Activated CD4-positive, alpha-beta T cell treated with anti-CD3 and anti-CD28 coated beads for 36 hours (primary cell): ENCODE measurements at regions of chr17 and their contacts with region 1.

Region 1: GRCh38 chr17:48392857-48393256 is 37.2 kb downstream of the SKAP1 start:
- DNase-seq: no peak
- ATAC-seq: no peak
- H3K4me3 Mint-ChIP-seq: no peak overlapping the region
- H3K27ac Mint-ChIP-seq: no peak overlapping the region
- H3K4me1 Mint-ChIP-seq: peaks cover 48% of the 10 kb centered on the region
- H3K27me3 Mint-ChIP-seq: no peaks in the 10 kb centered on the region

Region 2: GRCh38 chr17:48374650-48375230 is 18.1 kb before region 1 on chr17:
- CTCF ChIA-PET with region 1: interaction called, 10 read pairs
- POLR2A ChIA-PET with region 1: interaction called, 3 read pairs
- intact Hi-C with region 1: no loop called
- DNase-seq: peak; percentile 42
- ATAC-seq: peak; percentile 61
- H3K4me3 Mint-ChIP-seq: no peak overlapping the region
- H3K27ac Mint-ChIP-seq: no peak overlapping the region
- H3K4me1 Mint-ChIP-seq: peaks cover 29% of the 10 kb centered on the region
- H3K27me3 Mint-ChIP-seq: no peaks in the 10 kb centered on the region

Region 3: DNA sequence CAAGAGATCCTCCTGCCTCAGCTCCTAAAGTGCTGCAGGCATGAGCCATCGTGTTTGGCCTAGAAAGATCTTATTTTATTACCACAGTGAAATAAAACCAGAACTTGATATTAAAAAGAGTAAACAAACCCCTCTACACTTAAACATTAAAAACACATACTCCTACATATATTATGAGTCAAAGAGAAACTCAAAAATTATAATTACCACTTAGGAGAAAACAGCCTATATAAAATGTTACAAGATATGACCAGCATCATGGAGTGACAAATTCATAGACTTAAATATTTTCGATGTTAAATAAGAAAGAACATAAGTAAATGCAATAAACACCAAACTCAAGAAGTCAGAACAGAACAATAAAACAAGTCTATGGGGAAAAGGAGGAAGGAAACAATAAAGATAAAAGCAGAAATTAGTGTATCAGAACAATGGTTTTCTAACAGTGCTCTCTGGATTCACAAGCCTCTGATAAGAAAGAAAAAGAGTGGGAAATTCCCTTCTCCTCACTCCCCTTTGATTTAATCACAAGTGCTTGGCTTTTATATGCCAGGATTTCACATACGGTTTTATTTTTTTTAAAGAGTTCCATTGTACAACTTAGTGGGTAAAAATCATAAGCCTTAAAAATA is 14.2 kb after region 1 on chr17:
- CTCF ChIA-PET with region 1: interaction called, 15 read pairs
- POLR2A ChIA-PET with region 1: interaction called, 9 read pairs
- intact Hi-C with region 1: loop called (anchors 1 to 2 kb)
- DNase-seq: no peak
- ATAC-seq: peak; percentile 40
- H3K4me3 Mint-ChIP-seq: peak overlapping the region; percentile 33
- H3K27ac Mint-ChIP-seq: peak overlapping the region; percentile 82
- H3K4me1 Mint-ChIP-seq: peaks cover 61% of the 10 kb centered on the region
- H3K27me3 Mint-ChIP-seq: no peaks in the 10 kb centered on the region

Region 4: DNA sequence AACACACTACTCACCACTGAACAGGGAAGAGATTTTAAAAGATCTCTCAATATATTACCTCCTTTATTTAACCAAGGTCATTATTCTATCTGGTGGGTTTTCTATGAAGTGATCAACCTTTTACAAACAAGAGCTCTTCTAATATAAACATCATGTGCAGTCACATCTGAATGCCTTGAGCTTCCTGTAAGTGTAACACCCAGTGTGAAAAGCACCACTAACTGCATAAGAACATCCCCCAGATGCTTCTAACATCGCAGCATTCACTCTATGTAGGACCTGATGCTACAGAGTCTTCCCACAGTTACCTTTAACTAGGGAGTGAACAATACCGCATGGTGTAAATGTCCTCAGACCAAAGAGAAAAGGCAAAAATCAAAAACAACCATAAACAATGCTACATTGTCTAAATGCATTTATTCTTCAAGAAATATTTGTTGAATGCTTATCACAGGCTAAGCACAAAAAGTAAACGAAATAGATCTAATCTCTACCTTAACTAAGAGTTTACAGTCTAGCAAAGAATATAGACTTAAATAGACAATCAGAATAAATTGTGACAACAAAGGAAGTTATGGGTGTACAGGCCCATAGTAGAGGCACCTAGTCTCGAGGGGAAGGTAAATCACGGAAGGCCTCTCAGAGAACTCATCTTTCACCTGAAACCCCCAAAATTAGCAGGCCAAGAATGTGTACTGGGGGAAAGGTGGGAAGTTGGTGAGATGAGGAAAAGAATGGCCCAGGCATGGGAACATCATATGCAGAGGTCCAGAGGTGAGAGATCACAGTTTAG is 21.0 kb after region 1 on chr17:
- CTCF ChIA-PET with region 1: interaction called, 4 read pairs
- POLR2A ChIA-PET with region 1: interaction called, 9 read pairs
- intact Hi-C with region 1: loop called (anchors 1 to 2 kb)
- DNase-seq: no peak
- ATAC-seq: peak; percentile 43
- H3K4me3 Mint-ChIP-seq: peak overlapping the region; percentile 10
- H3K27ac Mint-ChIP-seq: peak overlapping the region; percentile 95
- H3K4me1 Mint-ChIP-seq: peaks cover 93% of the 10 kb centered on the region
- H3K27me3 Mint-ChIP-seq: no peaks in the 10 kb centered on the region

Region 5: GRCh38 chr17:48429638-48430586 is 37.1 kb after region 1 on chr17 and contains the start of gene SKAP1:
- CTCF ChIA-PET with region 1: interaction called, 4 read pairs
- POLR2A ChIA-PET with region 1: no interaction called
- intact Hi-C with region 1: loop called (anchors 2 to 5 kb)
- DNase-seq: peak; percentile 77
- ATAC-seq: peak; percentile 62
- H3K4me3 Mint-ChIP-seq: peak within 1 kb of the TSS; percentile 94
- H3K27ac Mint-ChIP-seq: peak within 1 kb of the TSS; percentile 98
- H3K4me1 Mint-ChIP-seq: peaks cover 57% of the 10 kb centered on the region
- H3K27me3 Mint-ChIP-seq: no peaks in the 10 kb centered on the region
- total RNA-seq, gene SKAP1: 76.1 to 109 TPM